Colonic mucosa (tissue), 4 donors: ENCODE measurements at regions of chr14 and their contacts with region 1.

Region 1: GRCh38 chr14:92783816-92784431 is 10.2 kb upstream of the GOLGA5 start:
- DNase-seq: peak; percentile 59
- H3K4me3 ChIP-seq: no peak overlapping the region
- H3K27ac ChIP-seq: no peak overlapping the region
- H3K4me1 ChIP-seq: no peaks in the 10 kb centered on the region
- H3K27me3 ChIP-seq: no peaks in the 10 kb centered on the region
- CTCF ChIP-seq: peak; percentile 61

Region 2: GRCh38 chr14:92686900-92687444 is 97.0 kb before region 1 on chr14:
- intact Hi-C with region 1: no loop called
- DNase-seq: peak; percentile 84
- H3K4me3 ChIP-seq: peak overlapping the region; percentile 32
- H3K27ac ChIP-seq: no peak overlapping the region
- H3K4me1 ChIP-seq: peaks cover 7% of the 10 kb centered on the region
- H3K27me3 ChIP-seq: no peaks in the 10 kb centered on the region
- CTCF ChIP-seq: peak; percentile 100

Region 3: DNA sequence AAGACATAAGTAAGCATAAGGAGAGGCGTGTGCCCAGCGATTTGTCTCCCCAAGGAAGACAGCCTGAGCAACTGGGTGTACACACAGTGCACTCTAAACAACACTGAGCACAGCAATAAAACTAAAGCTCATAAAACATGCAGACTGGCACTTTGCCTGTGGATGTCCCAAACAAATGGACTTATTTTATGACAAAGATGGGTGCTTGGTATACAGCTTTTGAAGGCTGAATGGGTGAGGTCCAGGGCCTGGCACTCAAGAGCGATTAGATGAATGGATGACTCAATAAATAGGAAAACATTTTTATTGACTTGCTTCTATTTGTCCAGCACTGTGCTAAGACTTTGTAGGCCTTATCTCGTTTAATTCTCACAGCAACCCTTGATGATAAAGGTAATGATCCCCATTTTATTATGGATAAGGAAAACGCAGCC is 64.0 kb before region 1 on chr14:
- intact Hi-C with region 1: loop called (anchors 2 kb)
- DNase-seq: peak; percentile 88
- H3K4me3 ChIP-seq: no peak overlapping the region
- H3K27ac ChIP-seq: peak overlapping the region; percentile 46
- H3K4me1 ChIP-seq: peaks cover 2% of the 10 kb centered on the region
- H3K27me3 ChIP-seq: no peaks in the 10 kb centered on the region
- CTCF ChIP-seq: no peak